A549 (cell line): ENCODE measurements at regions of chr13 and their contacts with region 1.

Region 1: GRCh38 chr13:74287724-74288169 is 153.5 kb upstream of the KLF12 start:
- DNase-seq: peak in 1 of 2 experiments; percentile 19
- ATAC-seq: peak; percentile 45 to 55; a peak in 4 of 6 replicates
- H3K4me3 ChIP-seq: no peak overlapping the region
- H3K27ac ChIP-seq: no peak overlapping the region
- H3K4me1 ChIP-seq: peaks cover 12% of the 10 kb centered on the region; the same call in 2 of the 3 replicates
- CTCF ChIP-seq: no peak
- EP300 ChIP-seq: no peak
- POLR2A ChIP-seq: no peak
- RAD21 ChIP-seq: no peak

Region 2: DNA sequence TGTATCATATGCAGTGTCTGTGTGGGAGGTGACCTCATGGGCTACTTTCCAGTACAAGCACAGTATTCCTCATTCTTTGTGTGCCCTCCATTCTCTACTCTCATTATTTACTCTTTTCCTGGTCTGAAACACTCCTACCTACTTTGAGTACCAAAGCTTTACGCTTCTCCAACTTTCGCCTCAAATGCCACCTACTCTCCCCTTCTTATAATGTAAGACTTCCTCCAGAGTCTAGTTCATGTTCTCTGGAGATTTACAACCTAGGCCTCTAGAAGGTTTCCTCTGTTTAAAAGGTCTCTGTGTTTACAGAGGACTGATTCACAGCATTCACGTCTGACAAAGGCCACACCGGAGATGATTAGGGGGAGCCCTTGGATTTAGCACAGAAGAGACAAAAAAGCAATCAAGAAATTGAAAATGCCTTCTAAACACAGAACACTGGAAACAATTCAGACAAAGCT is 455.6 kb before region 1 on chr13:
- CTCF ChIA-PET with region 1: interaction called, 12 read pairs
- POLR2A ChIA-PET with region 1: no interaction called
- DNase-seq: peak in 1 of 2 experiments; percentile 6
- ATAC-seq: peak in 1 of 2 experiments; percentile 56; a peak in 2 of 6 replicates
- H3K4me3 ChIP-seq: no peak overlapping the region
- H3K27ac ChIP-seq: 0 out of 6 replicates have a peak overlapping the region, but pooled peaks of 1 of the 2 experiments have one; percentile 12
- H3K4me1 ChIP-seq: peaks cover 11% of the 10 kb centered on the region
- CTCF ChIP-seq: no peak
- EP300 ChIP-seq: no peak
- POLR2A ChIP-seq: no peak
- RAD21 ChIP-seq: no peak

Region 3: DNA sequence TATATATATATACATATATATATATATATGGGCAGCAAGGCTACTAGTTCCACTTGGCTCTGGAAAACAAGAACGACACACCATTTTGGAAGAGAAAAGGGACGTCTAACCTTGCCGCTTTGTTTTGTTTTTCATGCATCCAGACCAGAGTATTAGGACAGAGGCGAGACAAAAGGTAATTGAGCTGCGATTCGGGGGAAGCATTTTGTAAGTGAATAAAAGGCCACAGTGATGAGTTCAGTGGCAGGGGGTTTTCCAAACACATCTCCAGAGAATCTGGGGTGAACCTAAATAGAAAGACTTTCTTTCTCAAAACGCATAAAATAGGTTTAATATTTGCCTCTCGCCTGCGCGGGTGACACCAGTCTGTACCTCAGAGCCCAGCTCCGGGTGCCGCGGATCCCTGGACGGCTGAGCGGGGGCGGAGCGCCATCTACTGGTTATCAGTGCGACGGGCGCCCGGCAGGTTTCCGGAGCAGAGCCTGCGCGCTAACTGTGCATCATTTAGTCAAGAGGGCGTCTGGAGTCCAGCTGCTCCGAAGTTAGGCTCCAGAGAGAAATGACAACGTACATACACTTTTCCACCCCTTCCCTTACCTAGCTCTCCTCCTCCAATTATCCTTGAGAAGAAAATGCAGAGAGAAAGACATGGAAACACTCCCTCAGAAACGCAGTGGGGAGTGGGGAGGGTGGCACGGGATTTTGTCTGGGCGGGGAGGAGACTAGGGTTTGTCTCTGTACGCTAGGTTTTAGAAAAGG is 931.9 kb after region 1 on chr13:
- CTCF ChIA-PET with region 1: interaction called, 13 read pairs
- POLR2A ChIA-PET with region 1: no interaction called
- DNase-seq: peak; percentile 47 to 58
- ATAC-seq: peak; percentile 98 to 100
- H3K4me3 ChIP-seq: peak overlapping the region; percentile 37
- H3K27ac ChIP-seq: peak overlapping the region; percentile 78 to 82
- H3K4me1 ChIP-seq: no peaks in the 10 kb centered on the region
- CTCF ChIP-seq: peak; percentile 75
- EP300 ChIP-seq: no peak
- POLR2A ChIP-seq: no peak
- RAD21 ChIP-seq: peak; percentile 96 to 98